HepG2 (cell line): ENCODE measurements at regions of chr2 and their contacts with region 1.

Region 1: DNA sequence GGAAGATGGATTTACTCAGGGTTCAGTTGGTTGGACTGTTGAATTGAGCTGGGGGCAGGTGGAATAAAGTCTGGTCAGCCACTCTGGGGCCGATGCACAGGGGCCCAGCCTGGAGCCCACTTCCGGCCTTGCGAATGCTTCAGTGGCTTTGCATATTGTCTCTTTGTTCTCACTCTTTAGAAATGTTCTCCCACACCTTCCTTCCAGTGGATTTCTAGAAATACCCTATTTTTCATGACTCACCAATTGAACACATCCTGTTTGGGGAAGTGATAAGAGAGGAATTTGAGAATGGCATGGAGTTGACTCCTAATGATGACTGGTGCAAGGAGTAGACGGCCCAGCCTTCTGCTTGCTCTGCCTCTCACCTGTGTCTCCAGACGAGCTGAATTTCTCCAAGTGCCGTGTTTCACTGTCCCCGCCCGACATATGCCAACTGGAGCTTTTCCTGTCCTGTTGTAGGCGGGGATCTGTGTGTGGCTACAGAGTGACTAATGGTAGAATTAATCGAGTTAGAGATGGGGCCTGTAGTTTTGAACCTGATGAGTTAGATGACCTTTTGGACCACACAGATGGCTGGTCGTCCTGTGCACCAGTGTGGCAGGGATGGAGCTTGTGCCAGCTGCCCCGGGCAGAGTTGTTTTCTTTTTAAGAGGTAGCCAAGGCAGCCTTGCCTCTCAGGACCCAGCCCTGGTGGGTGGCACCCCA is 28.2 kb downstream of the ASAP2 start:
- DNase-seq: peak; percentile 96
- ATAC-seq: peak; percentile 65
- H3K4me3 ChIP-seq: peak overlapping the region; percentile 40 to 66 (median 49); a peak in 5 of 6 replicates
- H3K27ac ChIP-seq: peak overlapping the region; percentile 84
- H3K4me1 ChIP-seq: peaks cover 88% of the 10 kb centered on the region
- H3K27me3 ChIP-seq: no peaks in the 10 kb centered on the region
- CTCF ChIP-seq: no peak
- EP300 ChIP-seq: peak in 1 of 2 experiments; percentile 82; a peak in 2 of 4 replicates
- POLR2A ChIP-seq: peak in 1 of 2 experiments; percentile 11; a peak in 1 of 4 replicates
- RAD21 ChIP-seq: no peak

Region 2: DNA sequence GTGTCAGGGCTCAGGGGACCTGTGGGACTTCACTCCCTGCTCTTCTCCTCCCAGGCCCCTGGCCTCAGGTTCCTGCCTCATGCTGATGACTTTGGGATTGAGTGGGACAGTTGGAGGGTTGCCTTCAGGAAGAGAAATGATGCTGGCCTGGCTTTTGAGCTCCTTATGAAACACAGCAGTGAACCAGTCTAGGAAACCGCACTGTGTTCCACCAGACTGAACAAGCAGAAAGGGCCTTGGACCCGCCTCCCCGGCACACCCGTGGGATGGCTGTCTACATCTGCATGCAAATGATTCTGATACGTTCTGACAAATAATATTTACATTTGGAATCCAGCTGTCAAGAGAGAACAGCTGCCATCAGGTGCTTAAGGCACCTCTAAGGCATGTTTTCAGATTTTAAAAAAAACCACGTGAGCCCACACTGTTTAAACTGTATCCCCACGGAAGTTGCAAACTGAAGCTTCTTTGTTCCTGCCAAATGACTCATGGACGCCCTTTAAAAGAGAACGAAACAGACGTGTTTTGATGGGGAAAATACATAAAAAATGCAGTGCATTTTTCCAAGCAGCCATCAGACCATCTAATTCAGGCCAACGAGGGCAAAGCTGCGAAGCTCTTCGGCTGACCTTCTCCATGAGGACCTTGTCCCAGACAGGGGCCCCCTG is 55.8 kb before region 1 on chr2:
- CTCF ChIA-PET with region 1: no interaction called
- POLR2A ChIA-PET with region 1: interaction called, 13 read pairs
- in situ Hi-C with region 1: no loop called
- intact Hi-C with region 1: no loop called
- DNase-seq: peak; percentile 93
- ATAC-seq: peak; percentile 86
- H3K4me3 ChIP-seq: peak overlapping the region in 1 of 3 experiments; percentile 2; a peak in 2 of 6 replicates
- H3K27ac ChIP-seq: peak overlapping the region; percentile 43
- H3K4me1 ChIP-seq: peaks cover 41% of the 10 kb centered on the region
- H3K27me3 ChIP-seq: peaks cover 2 to 24% of the 10 kb centered on the region in 2 experiments; a peak in 4 of 5 replicates
- CTCF ChIP-seq: no peak
- EP300 ChIP-seq: peak in 1 of 2 experiments; percentile 60; a peak in 1 of 4 replicates
- POLR2A ChIP-seq: no peak
- RAD21 ChIP-seq: no peak

Region 3: GRCh38 chr2:9222239-9222892 is 12.5 kb before region 1 on chr2:
- CTCF ChIA-PET with region 1: no interaction called
- POLR2A ChIA-PET with region 1: interaction called, 11 read pairs
- in situ Hi-C with region 1: no loop called
- intact Hi-C with region 1: no loop called
- DNase-seq: no peak
- ATAC-seq: no peak
- H3K4me3 ChIP-seq: no peak overlapping the region
- H3K27ac ChIP-seq: no peak overlapping the region
- H3K4me1 ChIP-seq: peaks cover 29% of the 10 kb centered on the region
- H3K27me3 ChIP-seq: no peaks in the 10 kb centered on the region
- CTCF ChIP-seq: no peak
- EP300 ChIP-seq: no peak
- POLR2A ChIP-seq: no peak
- RAD21 ChIP-seq: no peak

Region 4: DNA sequence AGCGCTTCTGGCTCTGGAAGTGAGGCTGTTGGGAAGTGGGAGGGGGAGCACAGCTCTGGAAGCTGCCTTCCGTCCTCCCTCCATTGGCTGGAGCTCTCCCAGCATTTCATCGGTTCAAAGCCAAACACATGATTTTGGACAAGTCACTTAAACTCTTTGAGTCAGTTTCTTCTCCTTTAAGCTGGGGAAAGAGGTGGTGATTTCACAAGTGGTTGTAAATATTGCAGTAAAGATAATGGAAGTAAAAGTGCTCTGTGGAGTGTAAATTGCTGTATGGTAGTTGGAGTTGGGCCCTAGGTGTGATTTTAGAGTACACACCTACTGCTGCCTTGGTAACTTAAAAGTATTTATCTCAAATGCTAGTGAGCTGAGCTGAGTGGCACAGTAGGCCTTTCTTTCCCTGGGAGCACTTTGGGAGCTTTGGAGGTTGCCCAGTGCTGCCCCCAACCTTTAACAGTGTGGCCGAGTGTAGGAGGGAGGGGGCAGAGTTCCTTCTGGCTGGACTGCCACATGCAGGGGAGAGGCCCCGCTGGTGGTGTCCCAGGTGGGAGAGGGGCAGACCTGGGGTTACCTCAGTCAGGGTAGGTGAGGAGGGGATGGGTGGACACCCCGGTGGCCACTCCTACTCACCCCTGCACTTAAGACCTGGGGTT is 26.5 kb after region 1 on chr2:
- CTCF ChIA-PET with region 1: no interaction called
- POLR2A ChIA-PET with region 1: interaction called, 11 read pairs
- in situ Hi-C with region 1: no loop called
- intact Hi-C with region 1: no loop called
- DNase-seq: no peak
- ATAC-seq: peak; percentile 69
- H3K4me3 ChIP-seq: peak overlapping the region in 1 of 3 experiments; percentile 27; a peak in 2 of 6 replicates
- H3K27ac ChIP-seq: peak overlapping the region; percentile 9
- H3K4me1 ChIP-seq: peaks cover 38% of the 10 kb centered on the region
- H3K27me3 ChIP-seq: no peaks in the 10 kb centered on the region
- CTCF ChIP-seq: peak; percentile 38
- EP300 ChIP-seq: no peak
- POLR2A ChIP-seq: no peak
- RAD21 ChIP-seq: no peak

Region 5: GRCh38 chr2:9385841-9386240 is 151.0 kb after region 1 on chr2:
- CTCF ChIA-PET with region 1: no interaction called
- POLR2A ChIA-PET with region 1: interaction called, 11 read pairs
- in situ Hi-C with region 1: no loop called
- intact Hi-C with region 1: no loop called
- DNase-seq: no peak
- ATAC-seq: no peak
- H3K4me3 ChIP-seq: no peak overlapping the region
- H3K27ac ChIP-seq: peak overlapping the region; percentile 54
- H3K4me1 ChIP-seq: peaks cover 72% of the 10 kb centered on the region
- H3K27me3 ChIP-seq: no peaks in the 10 kb centered on the region
- CTCF ChIP-seq: no peak
- EP300 ChIP-seq: no peak
- POLR2A ChIP-seq: no peak
- RAD21 ChIP-seq: no peak